Transverse colon (tissue), 4 donors: ENCODE measurements at regions of chr14 and their contacts with region 1.

Region 1: GRCh38 chr14:63770187-63770807 is 42.4 kb upstream of the SGPP1 start:
- DNase-seq: peak; percentile 53
- H3K4me3 ChIP-seq: no peak overlapping the region
- H3K27ac ChIP-seq: no peak overlapping the region
- H3K4me1 ChIP-seq: no peaks in the 10 kb centered on the region
- H3K27me3 ChIP-seq: no peaks in the 10 kb centered on the region
- CTCF ChIP-seq: peak; percentile 41 to 65 (median 59)
- EP300 ChIP-seq: no peak
- POLR2A ChIP-seq: no peak

Region 2: DNA sequence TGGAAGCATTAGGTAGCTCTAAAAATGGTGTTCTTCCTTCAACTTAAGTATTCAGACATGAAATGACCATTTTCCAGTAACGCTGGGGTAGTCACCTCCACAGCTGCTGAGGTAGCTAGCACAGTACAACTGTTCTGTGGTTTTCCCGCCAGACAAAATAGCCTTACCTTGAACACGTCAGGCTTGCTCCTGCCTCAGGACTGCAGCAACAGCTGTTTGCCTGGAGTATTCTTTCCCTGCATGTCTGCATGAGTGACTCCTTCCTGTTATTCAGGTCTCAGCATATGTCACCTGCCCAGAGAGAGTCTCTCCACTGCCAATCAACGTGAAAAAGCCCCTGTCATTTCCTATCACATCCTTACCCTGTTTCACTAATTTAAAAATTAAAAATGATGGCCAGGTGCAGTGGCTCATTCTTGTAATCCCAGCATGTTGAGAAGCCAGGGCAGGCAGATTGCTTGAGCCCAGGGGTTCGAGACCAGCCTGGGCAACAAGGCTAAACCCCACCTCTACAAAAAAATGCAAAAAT is 166.5 kb before region 1 on chr14:
- in situ Hi-C with region 1: no loop called
- intact Hi-C with region 1: no loop called
- DNase-seq: no peak
- H3K4me3 ChIP-seq: no peak overlapping the region
- H3K27ac ChIP-seq: no peak overlapping the region
- H3K4me1 ChIP-seq: peaks cover 0 to 11% (median 2%) of the 10 kb centered on the region in 4 donors
- H3K27me3 ChIP-seq: no peaks in the 10 kb centered on the region
- CTCF ChIP-seq: no peak
- EP300 ChIP-seq: no peak
- POLR2A ChIP-seq: no peak

Region 3: GRCh38 chr14:63632932-63633514 is 137.3 kb before region 1 on chr14:
- in situ Hi-C with region 1: loop called in 3 of 4 experiments (anchors 10 to 25 kb)
- intact Hi-C with region 1: no loop called
- DNase-seq: no peak
- H3K4me3 ChIP-seq: no peak overlapping the region
- H3K27ac ChIP-seq: no peak overlapping the region
- H3K4me1 ChIP-seq: no peaks in the 10 kb centered on the region
- H3K27me3 ChIP-seq: no peaks in the 10 kb centered on the region
- CTCF ChIP-seq: peak; percentile 33 to 54 (median 51)
- EP300 ChIP-seq: no peak
- POLR2A ChIP-seq: no peak

Region 4: GRCh38 chr14:63641473-63642228 is 128.6 kb before region 1 on chr14 and contains the start of gene WDR89:
- in situ Hi-C with region 1: loop called in 3 of 4 experiments (anchors 10 to 25 kb)
- intact Hi-C with region 1: no loop called
- DNase-seq: peak; percentile 98
- H3K4me3 ChIP-seq: peak within 1 kb of the TSS; percentile 43 to 69 (median 48)
- H3K27ac ChIP-seq: peak within 1 kb of the TSS; percentile 94 to 97 (median 94)
- H3K4me1 ChIP-seq: peaks cover 0 to 22% (median 11%) of the 10 kb centered on the region in 4 donors
- H3K27me3 ChIP-seq: no peaks in the 10 kb centered on the region
- CTCF ChIP-seq: peak; percentile 83 to 97 (median 88)
- EP300 ChIP-seq: no peak
- POLR2A ChIP-seq: peak; percentile 73
- total RNA-seq, gene WDR89: 3.8 to 17.2 (median 7.2) TPM